GM12878 (cell line): ENCODE measurements at regions of chr6 and their contacts with region 1.

Region 1: GRCh38 chr6:88157106-88157505 is 9.0 kb downstream of the CNR1 start:
- DNase-seq: no peak
- ATAC-seq: no peak
- H3K4me3 ChIP-seq: no peak overlapping the region
- H3K27ac ChIP-seq: no peak overlapping the region
- H3K4me1 ChIP-seq: no peaks in the 10 kb centered on the region
- H3K27me3 ChIP-seq: no peaks in the 10 kb centered on the region
- CTCF ChIP-seq: no peak
- EP300 ChIP-seq: no peak
- POLR2A ChIP-seq: no peak
- RAD21 ChIP-seq: no peak

Region 2: DNA sequence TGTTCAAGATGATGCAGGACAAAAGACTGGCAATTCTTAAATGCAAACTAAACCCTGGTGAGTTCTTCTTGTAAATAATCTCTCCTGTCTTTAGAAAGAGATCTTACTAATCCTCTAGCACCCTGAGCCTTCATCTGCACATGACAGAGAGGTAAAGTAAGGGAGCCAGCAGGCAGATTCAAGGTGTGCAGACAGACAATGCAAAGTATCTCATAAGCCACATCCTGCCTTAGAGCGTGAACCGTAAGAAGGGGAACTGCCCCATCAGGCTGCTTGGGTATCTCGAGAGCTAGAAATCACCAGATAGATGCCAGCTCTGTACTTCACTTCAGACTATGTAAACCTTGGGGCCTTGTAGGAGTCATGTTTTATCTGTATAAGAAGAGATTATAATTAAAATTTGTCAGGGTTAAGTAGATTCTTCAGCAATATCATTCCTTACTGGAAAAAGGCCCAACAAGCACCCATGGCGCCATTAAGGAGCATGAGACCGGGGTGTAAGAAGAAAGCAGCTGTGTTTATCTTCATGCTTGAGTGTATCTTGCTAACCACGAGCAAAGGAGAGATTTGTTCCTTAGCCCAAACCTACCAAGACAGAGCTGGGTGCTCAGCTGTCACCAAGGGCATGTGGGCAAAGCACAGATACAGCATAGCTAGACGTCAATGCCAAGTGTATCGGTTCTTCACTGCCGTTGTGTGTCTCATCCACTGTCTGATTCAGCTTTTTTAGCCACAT is 15.4 kb before region 1 on chr6:
- CTCF ChIA-PET with region 1: interaction called, 5 read pairs
- POLR2A ChIA-PET with region 1: interaction called, 12 read pairs
- RAD21 ChIA-PET with region 1: interaction called, 10 read pairs
- SMC1A ChIA-PET with region 1: interaction called, 10 read pairs
- in situ Hi-C with region 1: no loop called
- intact Hi-C with region 1: no loop called
- DNase-seq: peak; percentile 84
- ATAC-seq: peak; percentile 94
- H3K4me3 ChIP-seq: 0 out of 2 replicates have a peak overlapping the region, but pooled peaks have one; percentile 29
- H3K27ac ChIP-seq: peak overlapping the region; percentile 61
- H3K4me1 ChIP-seq: peaks cover 18% of the 10 kb centered on the region
- H3K27me3 ChIP-seq: no peaks in the 10 kb centered on the region
- CTCF ChIP-seq: no peak
- EP300 ChIP-seq: peak in 1 of 2 experiments; percentile 40; a peak in 1 of 4 replicates
- POLR2A ChIP-seq: no peak
- RAD21 ChIP-seq: peak; percentile 37